A673 (cell line): ENCODE measurements at regions of chr22 and their contacts with region 1.

Region 1: DNA sequence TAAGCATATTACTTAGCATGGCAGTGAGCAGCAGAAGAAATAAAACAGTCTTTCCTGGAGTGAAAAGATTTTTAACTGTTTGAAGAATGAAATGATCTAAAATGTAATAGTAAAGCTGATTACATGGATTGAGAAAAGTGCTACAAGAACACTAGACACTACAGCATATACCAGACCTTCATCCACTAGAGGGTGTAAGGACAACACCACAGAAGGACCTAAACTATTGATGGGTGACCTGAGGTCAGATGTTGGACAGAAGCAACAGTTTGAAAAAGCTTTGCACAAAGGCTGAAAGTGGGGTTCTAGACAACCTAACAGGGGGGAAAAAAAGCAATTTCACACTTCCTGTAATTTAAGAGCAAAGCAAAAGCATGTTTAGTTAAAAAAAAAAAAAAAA is 97.7 kb downstream of the RBFOX2 start:
- DNase-seq: peak; percentile 54
- H3K4me3 ChIP-seq: no peak overlapping the region
- H3K27ac ChIP-seq: no peak overlapping the region
- H3K4me1 ChIP-seq: peaks cover 7% of the 10 kb centered on the region
- H3K27me3 ChIP-seq: no peaks in the 10 kb centered on the region
- CTCF ChIP-seq: peak; percentile 70

Region 2: GRCh38 chr22:35539910-35540594 is 390.9 kb before region 1 on chr22:
- CTCF ChIA-PET with region 1: no interaction called
- POLR2A ChIA-PET with region 1: no interaction called
- intact Hi-C with region 1: no loop called
- DNase-seq: peak; percentile 63
- H3K4me3 ChIP-seq: peak overlapping the region; percentile 54
- H3K27ac ChIP-seq: peak overlapping the region; percentile 21
- H3K4me1 ChIP-seq: peaks cover 45% of the 10 kb centered on the region
- H3K27me3 ChIP-seq: no peaks in the 10 kb centered on the region
- CTCF ChIP-seq: no peak

Region 3: DNA sequence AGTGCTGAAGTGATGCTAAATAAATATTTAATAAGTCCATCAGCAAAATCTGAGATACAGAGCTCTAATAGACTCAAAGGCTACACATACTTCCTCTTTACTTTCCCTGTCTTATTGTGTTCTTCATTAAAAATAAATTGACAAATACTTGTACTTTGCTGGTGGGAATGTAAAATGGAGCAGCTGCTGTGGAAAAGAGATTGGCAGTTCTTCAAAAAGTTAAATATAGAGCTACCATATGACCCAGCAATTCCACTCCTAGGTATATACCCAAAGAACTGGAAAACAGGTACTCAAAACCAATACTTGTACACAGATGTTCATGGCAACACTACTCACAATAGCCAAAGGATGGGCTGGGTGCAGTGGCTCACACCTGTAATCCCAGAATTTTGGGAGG is 21.6 kb after region 1 on chr22:
- CTCF ChIA-PET with region 1: no interaction called
- POLR2A ChIA-PET with region 1: no interaction called
- intact Hi-C with region 1: loop called (anchors 2 kb)
- DNase-seq: no peak
- H3K4me3 ChIP-seq: no peak overlapping the region
- H3K27ac ChIP-seq: no peak overlapping the region
- H3K4me1 ChIP-seq: peaks cover 12% of the 10 kb centered on the region
- H3K27me3 ChIP-seq: no peaks in the 10 kb centered on the region
- CTCF ChIP-seq: no peak

Region 4: GRCh38 chr22:35995772-35996171 is 64.8 kb after region 1 on chr22:
- CTCF ChIA-PET with region 1: interaction called, 11 read pairs
- POLR2A ChIA-PET with region 1: no interaction called
- intact Hi-C with region 1: no loop called
- DNase-seq: peak; percentile 93
- H3K4me3 ChIP-seq: no peak overlapping the region
- H3K27ac ChIP-seq: peak overlapping the region; percentile 78
- H3K4me1 ChIP-seq: peaks cover 34% of the 10 kb centered on the region
- H3K27me3 ChIP-seq: no peaks in the 10 kb centered on the region
- CTCF ChIP-seq: no peak

Region 5: GRCh38 chr22:36368359-36368983 is 437.5 kb after region 1 on chr22:
- CTCF ChIA-PET with region 1: no interaction called
- POLR2A ChIA-PET with region 1: no interaction called
- intact Hi-C with region 1: no loop called
- DNase-seq: peak; percentile 86
- H3K4me3 ChIP-seq: no peak overlapping the region
- H3K27ac ChIP-seq: peak overlapping the region; percentile 87
- H3K4me1 ChIP-seq: peaks cover 83% of the 10 kb centered on the region
- H3K27me3 ChIP-seq: no peaks in the 10 kb centered on the region
- CTCF ChIP-seq: no peak